Panc1 (cell line): ENCODE measurements at regions of chr5 and their contacts with region 1.

Region 1: DNA sequence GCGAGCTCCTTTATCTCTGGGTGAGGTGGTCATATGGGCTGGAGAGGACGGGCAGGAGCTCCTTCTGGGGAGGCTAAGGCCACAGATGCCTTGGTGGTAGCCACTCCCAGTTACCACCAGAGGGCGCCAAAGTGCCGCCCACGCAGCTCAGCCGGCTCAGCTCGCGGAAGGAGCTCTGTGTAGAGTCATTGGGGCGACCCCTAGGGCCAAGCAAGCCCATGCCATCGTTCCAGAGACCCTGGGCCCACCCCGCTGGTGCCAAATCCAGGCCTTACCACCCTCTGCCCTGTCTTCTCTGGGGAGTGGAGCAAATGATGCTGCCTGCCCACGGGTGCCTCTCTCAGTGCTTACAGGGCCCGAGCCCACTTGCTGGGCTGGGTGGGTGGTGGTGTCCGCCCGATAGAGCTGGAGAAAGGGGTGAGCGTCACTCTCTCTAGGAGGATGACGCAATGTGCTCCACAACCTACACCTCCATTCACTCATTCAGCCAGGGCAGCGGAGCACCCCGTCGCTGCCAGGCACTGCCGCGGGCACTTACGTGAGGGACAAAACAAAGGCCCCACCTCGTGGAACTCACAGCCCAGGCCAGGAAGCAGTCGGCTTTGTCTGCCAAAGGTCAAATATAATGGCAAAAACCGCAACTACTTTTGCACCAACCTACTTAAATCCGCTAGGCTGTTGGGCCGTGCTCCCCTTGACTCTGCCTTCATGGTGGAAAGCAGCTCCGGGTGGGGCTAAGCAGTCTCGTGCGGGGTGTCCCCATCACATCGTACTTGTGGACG is 13.8 kb downstream of the TSPAN17 start:
- DNase-seq: peak; percentile 38
- ATAC-seq: peak; percentile 89
- H3K4me3 ChIP-seq: no peak overlapping the region
- H3K27ac ChIP-seq: no peak overlapping the region
- H3K4me1 ChIP-seq: no peaks in the 10 kb centered on the region
- H3K27me3 ChIP-seq: no peaks in the 10 kb centered on the region
- CTCF ChIP-seq: peak; percentile 98

Region 2: DNA sequence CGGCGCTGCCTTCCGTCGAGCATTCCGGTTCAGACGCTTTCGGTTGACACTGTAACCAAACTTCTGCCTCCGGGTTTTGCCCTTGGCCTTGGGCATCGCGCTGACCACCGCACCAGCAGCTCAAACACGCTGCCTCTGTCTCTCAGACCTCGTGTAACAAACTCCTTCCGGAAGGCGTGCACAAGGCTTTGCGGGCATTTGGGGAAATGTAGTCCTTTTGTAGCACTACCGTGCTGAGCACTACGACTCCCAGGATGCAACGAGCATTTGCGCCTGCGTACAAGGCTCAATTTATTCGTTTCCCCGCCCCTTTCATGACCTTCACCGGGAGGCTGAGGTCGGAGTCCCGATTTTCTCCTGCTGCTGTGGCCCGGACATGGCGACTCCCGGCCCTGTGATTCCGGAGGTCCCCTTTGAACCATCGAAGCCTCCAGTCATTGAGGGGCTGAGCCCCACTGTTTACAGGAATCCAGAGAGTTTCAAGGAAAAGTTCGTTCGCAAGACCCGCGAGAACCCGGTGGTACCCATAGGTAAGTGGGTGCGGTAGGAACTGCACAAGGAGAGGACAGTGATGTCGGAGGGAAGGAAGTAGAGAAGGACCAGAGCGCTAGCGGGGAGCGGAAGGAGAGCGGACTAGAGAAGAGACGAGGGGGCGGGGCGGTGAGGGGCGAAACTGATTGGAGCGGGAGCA is 272.5 kb before region 1 on chr5 and contains the starts of genes HIGD2A and NOP16:
- CTCF ChIA-PET with region 1: no interaction called
- POLR2A ChIA-PET with region 1: no interaction called
- in situ Hi-C with region 1: no loop called
- intact Hi-C with region 1: no loop called
- DNase-seq: peak; percentile 98
- ATAC-seq: peak; percentile 94
- H3K4me3 ChIP-seq: peak within 1 kb of the TSS; percentile 76 to 94
- H3K27ac ChIP-seq: peak within 1 kb of the TSS; percentile 100
- H3K4me1 ChIP-seq: peaks cover 17% of the 10 kb centered on the region
- H3K27me3 ChIP-seq: no peaks in the 10 kb centered on the region
- CTCF ChIP-seq: no peak
- total RNA-seq, gene HIGD2A: 162 TPM
- total RNA-seq, gene NOP16: 76.2 TPM

Region 3: GRCh38 chr5:176647030-176647866 is 13.8 kb before region 1 on chr5 and contains the start of gene TSPAN17:
- CTCF ChIA-PET with region 1: interaction called, 17 read pairs
- POLR2A ChIA-PET with region 1: no interaction called
- in situ Hi-C with region 1: no loop called
- intact Hi-C with region 1: no loop called
- DNase-seq: peak; percentile 82
- ATAC-seq: peak; percentile 95
- H3K4me3 ChIP-seq: peak within 1 kb of the TSS; percentile 78 to 89
- H3K27ac ChIP-seq: peak within 1 kb of the TSS; percentile 86
- H3K4me1 ChIP-seq: peaks cover 18% of the 10 kb centered on the region
- H3K27me3 ChIP-seq: no peaks in the 10 kb centered on the region
- CTCF ChIP-seq: no peak
- total RNA-seq, gene TSPAN17: 64.7 TPM

Region 4: DNA sequence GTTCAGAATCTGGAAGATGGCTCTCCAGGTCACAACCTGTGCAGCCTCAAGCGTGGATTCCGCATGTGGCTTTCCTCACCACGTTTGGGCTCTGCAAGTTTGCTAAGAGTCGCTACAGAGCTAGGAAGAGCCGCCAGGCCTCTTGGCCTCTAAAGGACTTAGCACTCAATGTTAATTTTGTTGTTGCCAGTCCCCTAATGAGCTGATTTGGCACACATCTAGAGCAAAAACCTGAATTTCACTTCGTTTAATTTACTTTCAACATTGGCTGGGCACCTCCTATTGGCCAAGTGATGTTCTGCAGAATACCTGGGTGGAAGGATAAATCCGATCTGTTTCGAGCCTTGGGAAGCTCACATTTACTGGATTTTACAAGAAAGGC is 83.5 kb after region 1 on chr5:
- CTCF ChIA-PET with region 1: interaction called, 11 read pairs
- POLR2A ChIA-PET with region 1: interaction called, 3 read pairs
- in situ Hi-C with region 1: no loop called
- intact Hi-C with region 1: no loop called
- DNase-seq: no peak
- ATAC-seq: no peak
- H3K4me3 ChIP-seq: no peak overlapping the region
- H3K27ac ChIP-seq: no peak overlapping the region
- H3K4me1 ChIP-seq: no peaks in the 10 kb centered on the region
- H3K27me3 ChIP-seq: no peaks in the 10 kb centered on the region
- CTCF ChIP-seq: no peak

Region 5: DNA sequence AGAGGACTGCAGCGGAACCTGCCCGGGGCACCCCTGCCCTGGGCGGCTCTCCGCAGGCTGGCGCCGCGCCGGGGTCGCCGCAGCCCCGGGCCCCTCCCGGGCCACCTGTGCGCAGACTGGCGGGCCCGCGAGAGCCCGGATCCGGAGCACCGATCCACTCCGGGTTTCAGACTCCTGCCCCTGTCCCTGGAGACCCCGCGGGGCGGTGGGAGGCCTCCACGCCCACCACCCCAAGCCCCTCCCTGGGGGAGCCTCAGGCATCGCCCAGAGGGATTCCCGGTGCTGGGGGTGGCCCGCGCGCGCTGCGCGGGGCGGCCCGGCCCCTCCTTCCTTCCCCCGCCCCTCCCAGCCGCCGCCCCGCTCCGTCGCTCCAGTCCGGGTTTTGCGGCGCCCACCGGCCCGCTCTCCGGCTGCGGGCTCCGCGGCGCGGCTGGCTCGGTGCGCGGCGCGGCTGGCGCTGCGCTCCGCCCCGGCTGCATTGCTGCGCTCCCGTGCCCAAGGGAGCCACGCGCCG is 149.1 kb after region 1 on chr5 and contains the start of gene UNC5A:
- CTCF ChIA-PET with region 1: interaction called, 5 read pairs
- POLR2A ChIA-PET with region 1: no interaction called
- in situ Hi-C with region 1: no loop called
- intact Hi-C with region 1: loop called (anchors 5 kb)
- DNase-seq: no peak
- ATAC-seq: peak; percentile 71
- H3K4me3 ChIP-seq: peak within 1 kb of the TSS; percentile 38 to 48
- H3K27ac ChIP-seq: no peak within 1 kb of the TSS
- H3K4me1 ChIP-seq: peaks cover 7% of the 10 kb centered on the region
- H3K27me3 ChIP-seq: peaks cover 15% of the 10 kb centered on the region
- CTCF ChIP-seq: no peak
- total RNA-seq, gene UNC5A: 0.13 TPM

Region 6: DNA sequence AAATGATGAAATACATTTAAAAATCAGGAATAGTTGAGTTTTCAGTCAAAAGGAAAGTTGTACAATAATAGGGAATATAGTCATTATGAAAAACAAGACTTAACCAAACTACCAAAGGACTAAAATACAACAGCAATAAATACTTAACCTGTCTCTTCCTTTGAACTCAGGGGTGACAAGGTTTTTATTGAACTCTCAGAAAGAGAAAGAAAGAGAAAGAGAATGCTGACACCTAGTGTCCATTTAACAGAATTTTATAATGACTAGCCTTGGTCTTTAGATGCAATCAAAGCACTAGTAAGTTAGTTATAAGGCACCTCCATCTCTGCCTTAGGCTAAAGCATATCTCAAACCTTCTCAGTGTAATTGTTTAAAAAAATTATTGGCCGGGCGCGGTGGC is 298.0 kb after region 1 on chr5:
- CTCF ChIA-PET with region 1: no interaction called
- POLR2A ChIA-PET with region 1: no interaction called
- in situ Hi-C with region 1: no loop called
- intact Hi-C with region 1: loop called (anchors 2 kb)
- DNase-seq: no peak
- ATAC-seq: peak; percentile 69; the same call in 1 of the 2 replicates
- H3K4me3 ChIP-seq: no peak overlapping the region
- H3K27ac ChIP-seq: no peak overlapping the region
- H3K4me1 ChIP-seq: no peaks in the 10 kb centered on the region
- H3K27me3 ChIP-seq: no peaks in the 10 kb centered on the region
- CTCF ChIP-seq: peak; percentile 60